ENCODE measurements at regions of chr1 and their contacts with region 1.

Region 1: GRCh38 chr1:15261155-15262002 is 14.4 kb downstream of the FHAD1 start:
- DNase-seq: no peak
- ATAC-seq: peak; percentile 78
- H3K4me3 ChIP-seq: peak overlapping the region; percentile 25; the same call in 1 of the 2 replicates
- H3K27ac ChIP-seq: peak overlapping the region; percentile 63
- H3K4me1 ChIP-seq: peaks cover 21% of the 10 kb centered on the region
- H3K27me3 ChIP-seq: no peaks in the 10 kb centered on the region
- CTCF ChIP-seq: no peak
- EP300 ChIP-seq: 0 out of 4 replicates have a peak, but pooled peaks of 1 of the 2 experiments have one; percentile 3
- POLR2A ChIP-seq: no peak
- RAD21 ChIP-seq: no peak

Region 2: GRCh38 chr1:15246960-15247614 is 14.3 kb before region 1 on chr1 and contains the start of gene FHAD1:
- CTCF ChIA-PET with region 1: interaction called, 14 read pairs
- POLR2A ChIA-PET with region 1: interaction called, 17 read pairs
- RAD21 ChIA-PET with region 1: interaction called, 13 read pairs
- SMC1A ChIA-PET with region 1: interaction called, 30 read pairs
- in situ Hi-C with region 1: no loop called
- intact Hi-C with region 1: no loop called
- DNase-seq: no peak
- ATAC-seq: peak; percentile 73
- H3K4me3 ChIP-seq: peak within 1 kb of the TSS; percentile 28; the same call in 1 of the 2 replicates
- H3K27ac ChIP-seq: no peak within 1 kb of the TSS
- H3K4me1 ChIP-seq: peaks cover 20% of the 10 kb centered on the region
- H3K27me3 ChIP-seq: no peaks in the 10 kb centered on the region
- CTCF ChIP-seq: no peak
- EP300 ChIP-seq: no peak
- POLR2A ChIP-seq: no peak
- RAD21 ChIP-seq: no peak
- polyA plus RNA-seq, gene FHAD1: 0.09 TPM in 1 of 2 experiments, not detected in the other